Esophagus muscularis mucosa (tissue), 4 donors: ENCODE measurements at regions of chr20 and their contacts with region 1.

Region 1: DNA sequence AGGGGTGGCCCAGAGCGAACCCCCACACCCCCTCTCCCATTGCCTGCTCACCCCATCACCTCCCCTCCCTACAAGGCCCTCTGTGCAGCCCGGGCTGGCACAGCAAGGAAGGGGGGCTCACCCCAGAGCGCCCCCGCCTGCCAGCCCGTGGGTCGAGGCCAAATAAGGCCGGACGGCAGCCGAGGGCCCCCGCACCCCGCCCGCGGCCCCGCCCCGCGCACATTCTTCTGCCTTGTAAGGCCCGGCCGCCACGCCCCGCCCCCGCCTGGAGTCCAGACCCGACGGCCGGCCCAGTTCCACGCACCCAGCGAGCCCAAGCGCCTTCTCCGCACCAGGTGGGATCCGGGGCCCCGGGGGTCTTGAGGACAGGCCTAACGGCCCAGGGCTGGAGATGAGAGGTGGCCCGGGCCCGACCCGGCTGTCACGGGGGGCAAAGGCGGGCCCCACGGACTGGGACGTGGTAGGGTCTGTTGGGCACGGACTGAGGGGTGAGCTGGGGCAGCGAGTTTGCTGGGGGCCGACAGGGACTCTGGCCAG is at the start of gene MYL9:
- DNase-seq: peak; percentile 96
- H3K4me3 ChIP-seq: peak within 1 kb of the TSS; percentile 73 to 92 (median 88)
- H3K27ac ChIP-seq: peak within 1 kb of the TSS; percentile 95 to 99 (median 98)
- H3K4me1 ChIP-seq: peaks cover 48 to 85% (median 80%) of the 10 kb centered on the region in 4 donors
- H3K27me3 ChIP-seq: no peaks in the 10 kb centered on the region
- CTCF ChIP-seq: no peak
- EP300 ChIP-seq: no peak
- POLR2A ChIP-seq: no peak
- total RNA-seq, gene MYL9: 2,169 to 3,466 (median 2,516) TPM

Region 2: GRCh38 chr20:36460648-36461599 is 80.4 kb before region 1 on chr20:
- intact Hi-C with region 1: loop called (anchors 5 kb)
- DNase-seq: peak; percentile 97
- H3K4me3 ChIP-seq: peak overlapping the region; percentile 68 to 79 (median 76)
- H3K27ac ChIP-seq: peak overlapping the region; percentile 96 to 99 (median 96)
- H3K4me1 ChIP-seq: peaks cover 38 to 48% (median 38%) of the 10 kb centered on the region in 4 donors
- H3K27me3 ChIP-seq: no peaks in the 10 kb centered on the region
- CTCF ChIP-seq: peak in 2 of 3 experiments; percentile 16 to 37
- EP300 ChIP-seq: no peak
- POLR2A ChIP-seq: peak; percentile 87